ENCODE measurements at regions of chr7 and their contacts with region 1.

Region 1: DNA sequence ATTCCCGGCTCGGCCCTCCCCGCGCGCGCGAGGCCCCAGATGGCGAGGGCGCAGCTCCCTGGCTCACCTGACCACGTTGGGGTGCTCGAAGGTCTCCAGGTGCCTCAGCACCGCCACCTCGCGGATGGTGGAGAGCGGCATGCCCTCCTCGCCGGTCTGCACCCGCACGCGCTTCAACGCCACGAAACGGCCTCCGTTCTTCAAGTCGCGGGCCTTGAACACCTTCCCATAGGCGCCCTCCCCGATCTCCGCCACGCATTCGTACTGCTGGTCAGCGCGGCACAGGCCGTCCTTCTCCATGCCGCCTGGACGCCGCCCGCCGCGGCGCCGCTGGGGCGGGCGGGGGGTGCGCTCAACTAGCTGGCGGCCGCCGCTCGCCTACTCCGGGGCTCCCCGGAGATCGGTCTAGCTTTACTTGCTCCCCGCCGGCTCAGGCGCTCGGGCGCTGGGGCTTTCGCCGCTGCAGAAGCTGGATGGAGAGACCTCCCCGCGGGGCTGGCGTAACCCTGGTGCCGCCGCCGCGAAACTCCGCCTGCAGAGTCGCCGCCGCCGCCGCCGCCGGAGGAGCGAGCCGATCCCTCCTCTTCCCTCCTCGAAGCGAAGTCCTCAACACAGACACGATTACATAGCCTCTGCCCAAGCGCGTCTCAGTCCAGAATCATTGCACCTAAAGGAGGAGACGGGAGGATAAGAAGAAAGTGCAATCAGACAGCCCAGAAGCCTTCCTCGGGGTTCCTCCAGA is 3.2 kb downstream of the CDK6 start:
- DNase-seq: peak; percentile 83 to 89 (median 86)
- H3K4me3 ChIP-seq: peak overlapping the region; percentile 73 to 89
- H3K4me3 Mint-ChIP-seq: peak overlapping the region; percentile 87 to 98 (median 94)
- H3K27ac ChIP-seq: peak overlapping the region; percentile 68
- H3K27ac Mint-ChIP-seq: peak overlapping the region; percentile 93 to 96 (median 94)
- H3K4me1 ChIP-seq: peaks cover 36% of the 10 kb centered on the region
- H3K4me1 Mint-ChIP-seq: peaks cover 30 to 66% (median 43%) of the 10 kb centered on the region in 4 donors
- H3K27me3 ChIP-seq: no peaks in the 10 kb centered on the region
- H3K27me3 Mint-ChIP-seq: no peaks in the 10 kb centered on the region

Region 2: GRCh38 chr7:91880413-91881241 is 952.6 kb before region 1 on chr7 and contains the start of gene MTERF1:
- CTCF ChIA-PET with region 1: no interaction called
- POLR2A ChIA-PET with region 1: no interaction called
- intact Hi-C with region 1: loop called (anchors 5 kb)
- DNase-seq: peak; percentile 89 to 91 (median 90)
- H3K4me3 ChIP-seq: peak within 1 kb of the TSS; percentile 77 to 86
- H3K4me3 Mint-ChIP-seq: peak within 1 kb of the TSS; percentile 92 to 100 (median 98)
- H3K27ac ChIP-seq: peak within 1 kb of the TSS; percentile 71
- H3K27ac Mint-ChIP-seq: peak within 1 kb of the TSS; percentile 88 to 98 (median 95)
- H3K4me1 ChIP-seq: peaks cover 26% of the 10 kb centered on the region
- H3K4me1 Mint-ChIP-seq: peaks cover 30 to 46% (median 35%) of the 10 kb centered on the region in 4 donors
- H3K27me3 ChIP-seq: no peaks in the 10 kb centered on the region
- H3K27me3 Mint-ChIP-seq: no peaks in the 10 kb centered on the region
- total RNA-seq, gene MTERF1: 29.9 to 32.4 TPM

Region 3: DNA sequence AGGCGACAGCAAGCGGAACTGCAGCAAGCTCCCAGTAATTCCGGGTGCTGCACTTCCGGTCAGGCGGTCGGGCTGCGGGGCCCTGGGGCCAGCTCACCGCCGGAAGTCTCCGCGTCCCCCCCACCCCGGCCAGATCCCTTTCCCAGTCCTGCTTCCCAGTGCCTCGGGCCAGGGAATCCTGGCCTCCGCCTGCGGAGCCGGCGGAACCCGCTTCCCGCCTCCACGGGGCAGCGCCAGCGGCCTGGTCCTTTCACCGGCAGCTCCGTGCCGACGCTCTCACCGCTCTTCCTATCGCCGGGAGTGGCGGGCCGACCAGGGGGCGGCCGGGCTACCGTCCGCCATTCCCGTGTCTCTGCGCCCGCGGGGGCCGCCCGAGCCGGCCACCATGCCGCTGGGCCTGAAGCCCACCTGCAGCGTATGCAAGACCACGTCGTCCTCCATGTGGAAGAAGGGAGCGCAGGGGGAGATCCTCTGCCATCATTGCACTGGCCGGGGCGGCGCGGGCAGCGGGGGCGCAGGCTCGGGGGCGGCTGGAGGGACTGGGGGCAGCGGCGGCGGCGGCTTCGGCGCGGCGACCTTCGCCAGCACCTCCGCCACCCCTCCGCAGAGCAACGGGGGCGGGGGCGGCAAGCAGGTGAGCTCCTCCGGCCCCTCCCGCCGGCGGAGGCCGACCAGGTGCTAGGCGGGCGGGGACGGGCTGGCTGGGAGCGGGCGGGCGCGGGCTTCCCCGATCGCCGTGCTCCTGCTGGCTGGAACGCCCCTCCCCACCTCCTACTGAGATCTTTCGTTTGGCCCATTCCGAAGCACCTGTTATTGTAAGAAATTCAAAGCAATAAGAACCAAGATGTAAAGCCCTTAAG is 385.6 kb before region 1 on chr7 and contains the start of gene GATAD1:
- CTCF ChIA-PET with region 1: interaction called, 3 read pairs
- POLR2A ChIA-PET with region 1: interaction called, 7 read pairs
- intact Hi-C with region 1: loop called (anchors 5 kb)
- DNase-seq: peak; percentile 81 to 86 (median 84)
- H3K4me3 ChIP-seq: peak within 1 kb of the TSS; percentile 68 to 74
- H3K4me3 Mint-ChIP-seq: peak within 1 kb of the TSS; percentile 92 to 98 (median 94)
- H3K27ac ChIP-seq: peak within 1 kb of the TSS; percentile 97
- H3K27ac Mint-ChIP-seq: peak within 1 kb of the TSS; percentile 98 to 99 (median 98)
- H3K4me1 ChIP-seq: peaks cover 16% of the 10 kb centered on the region
- H3K4me1 Mint-ChIP-seq: peaks cover 7 to 24% (median 13%) of the 10 kb centered on the region in 4 donors
- H3K27me3 ChIP-seq: no peaks in the 10 kb centered on the region
- H3K27me3 Mint-ChIP-seq: no peaks in the 10 kb centered on the region
- total RNA-seq, gene GATAD1: 31.9 to 34.8 TPM

Region 4: GRCh38 chr7:92621026-92621540 is 212.1 kb before region 1 on chr7:
- CTCF ChIA-PET with region 1: interaction called, 72 read pairs
- POLR2A ChIA-PET with region 1: interaction called, 13 read pairs
- intact Hi-C with region 1: loop called (anchors 1 kb)
- DNase-seq: peak; percentile 75 to 86 (median 78)
- H3K4me3 ChIP-seq: no peak overlapping the region
- H3K4me3 Mint-ChIP-seq: peak overlapping the region in 5 of 8 donors; percentile 17 to 71 (median 36)
- H3K27ac ChIP-seq: peak overlapping the region; percentile 39
- H3K27ac Mint-ChIP-seq: peak overlapping the region; percentile 45 to 94 (median 88)
- H3K4me1 ChIP-seq: peaks cover 25% of the 10 kb centered on the region
- H3K4me1 Mint-ChIP-seq: peaks cover 19 to 40% (median 26%) of the 10 kb centered on the region in 4 donors
- H3K27me3 ChIP-seq: no peaks in the 10 kb centered on the region
- H3K27me3 Mint-ChIP-seq: no peaks in the 10 kb centered on the region

Region 5: DNA sequence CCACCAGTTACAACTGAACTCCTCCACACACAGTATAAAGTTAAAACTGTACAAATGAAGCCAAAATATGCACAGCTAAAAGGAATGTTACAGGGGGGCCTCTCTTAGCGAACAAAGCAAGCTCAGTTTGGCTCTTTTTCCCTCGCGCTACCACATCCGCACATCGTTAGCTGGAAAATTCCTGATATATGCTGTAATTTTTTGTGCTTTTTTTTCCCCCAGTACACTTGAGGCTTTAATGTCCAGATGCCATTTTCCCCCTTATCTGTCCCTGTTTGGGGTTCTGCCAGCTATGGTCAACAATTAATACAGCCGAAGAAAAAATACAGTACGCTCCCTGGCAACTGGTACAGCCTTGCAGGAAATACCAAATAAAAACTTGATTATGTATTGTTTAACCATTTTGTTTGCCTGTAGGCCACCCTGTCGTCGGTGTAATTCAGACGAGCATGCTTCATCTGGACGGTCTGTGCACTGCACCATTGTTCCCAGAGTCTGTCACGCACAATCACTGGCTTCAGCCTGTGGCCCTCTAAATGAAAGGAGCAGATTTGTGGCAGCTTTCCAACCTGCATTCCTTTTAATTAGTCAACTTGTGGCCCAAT is 134.9 kb before region 1 on chr7:
- CTCF ChIA-PET with region 1: interaction called, 11 read pairs
- POLR2A ChIA-PET with region 1: interaction called, 3 read pairs
- intact Hi-C with region 1: no loop called
- DNase-seq: no peak
- H3K4me3 ChIP-seq: no peak overlapping the region
- H3K4me3 Mint-ChIP-seq: no peak overlapping the region
- H3K27ac ChIP-seq: no peak overlapping the region
- H3K27ac Mint-ChIP-seq: no peak overlapping the region
- H3K4me1 ChIP-seq: no peaks in the 10 kb centered on the region
- H3K4me1 Mint-ChIP-seq: peaks cover 6 to 10% (median 8%) of the 10 kb centered on the region in 4 donors
- H3K27me3 ChIP-seq: no peaks in the 10 kb centered on the region
- H3K27me3 Mint-ChIP-seq: no peaks in the 10 kb centered on the region

Region 6: GRCh38 chr7:92823042-92823441 is 10.2 kb before region 1 on chr7:
- CTCF ChIA-PET with region 1: interaction called, 122 read pairs
- POLR2A ChIA-PET with region 1: interaction called, 11 read pairs
- intact Hi-C with region 1: no loop called
- DNase-seq: no peak
- H3K4me3 ChIP-seq: no peak overlapping the region
- H3K4me3 Mint-ChIP-seq: peak overlapping the region in 2 of 8 donors; percentile 48
- H3K27ac ChIP-seq: no peak overlapping the region
- H3K27ac Mint-ChIP-seq: peak overlapping the region in 1 of 7 donors; percentile 59
- H3K4me1 ChIP-seq: peaks cover 44% of the 10 kb centered on the region
- H3K4me1 Mint-ChIP-seq: peaks cover 43 to 59% (median 49%) of the 10 kb centered on the region in 4 donors
- H3K27me3 ChIP-seq: no peaks in the 10 kb centered on the region
- H3K27me3 Mint-ChIP-seq: no peaks in the 10 kb centered on the region

Region 7: DNA sequence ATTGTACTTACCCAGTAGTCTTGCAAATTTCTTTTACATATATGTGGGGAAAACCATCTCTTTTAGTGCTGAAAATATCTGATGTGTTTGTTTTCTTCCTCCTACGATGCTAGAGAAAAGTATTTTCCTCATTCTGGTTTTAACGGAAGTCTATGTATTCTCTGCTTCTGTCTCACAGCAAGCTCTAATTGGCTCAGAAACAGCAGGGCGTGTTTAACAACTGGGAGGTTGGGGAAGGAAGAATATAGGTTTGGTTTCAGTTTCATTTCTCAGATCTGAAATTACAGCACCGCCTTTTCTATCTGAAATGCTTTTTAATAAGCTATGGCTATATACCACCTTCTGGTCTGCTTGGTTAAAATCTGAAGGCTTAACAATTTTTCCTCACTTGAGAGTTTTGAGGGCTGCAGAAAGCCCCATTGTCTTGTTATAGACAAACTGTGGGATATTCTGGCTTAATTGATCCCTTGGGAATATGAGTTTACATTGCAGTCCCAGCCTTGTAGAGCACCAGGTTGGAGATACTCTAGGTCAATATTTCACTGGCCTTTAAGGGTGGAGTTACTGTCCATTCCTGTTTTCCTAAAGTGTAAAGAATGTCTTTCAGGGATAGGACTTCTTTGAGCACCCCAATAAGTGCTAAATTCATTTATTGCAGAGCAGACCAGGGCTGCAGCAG is 284.8 kb after region 1 on chr7 and contains the start of gene SAMD9:
- CTCF ChIA-PET with region 1: no interaction called
- POLR2A ChIA-PET with region 1: interaction called, 3 read pairs
- intact Hi-C with region 1: loop called (anchors 2 kb)
- DNase-seq: peak; percentile 71 to 89 (median 82)
- H3K4me3 ChIP-seq: peak within 1 kb of the TSS; percentile 65 to 96
- H3K4me3 Mint-ChIP-seq: peak within 1 kb of the TSS; percentile 88 to 94 (median 91)
- H3K27ac ChIP-seq: peak within 1 kb of the TSS; percentile 75
- H3K27ac Mint-ChIP-seq: peak within 1 kb of the TSS; percentile 80 to 96 (median 95)
- H3K4me1 ChIP-seq: peaks cover 37% of the 10 kb centered on the region
- H3K4me1 Mint-ChIP-seq: peaks cover 33 to 60% (median 49%) of the 10 kb centered on the region in 4 donors
- H3K27me3 ChIP-seq: no peaks in the 10 kb centered on the region
- H3K27me3 Mint-ChIP-seq: no peaks in the 10 kb centered on the region
- total RNA-seq, gene SAMD9: 55.1 to 56.6 TPM